ENCODE measurements at regions of chr17 and their contacts with region 1.

Region 1: DNA sequence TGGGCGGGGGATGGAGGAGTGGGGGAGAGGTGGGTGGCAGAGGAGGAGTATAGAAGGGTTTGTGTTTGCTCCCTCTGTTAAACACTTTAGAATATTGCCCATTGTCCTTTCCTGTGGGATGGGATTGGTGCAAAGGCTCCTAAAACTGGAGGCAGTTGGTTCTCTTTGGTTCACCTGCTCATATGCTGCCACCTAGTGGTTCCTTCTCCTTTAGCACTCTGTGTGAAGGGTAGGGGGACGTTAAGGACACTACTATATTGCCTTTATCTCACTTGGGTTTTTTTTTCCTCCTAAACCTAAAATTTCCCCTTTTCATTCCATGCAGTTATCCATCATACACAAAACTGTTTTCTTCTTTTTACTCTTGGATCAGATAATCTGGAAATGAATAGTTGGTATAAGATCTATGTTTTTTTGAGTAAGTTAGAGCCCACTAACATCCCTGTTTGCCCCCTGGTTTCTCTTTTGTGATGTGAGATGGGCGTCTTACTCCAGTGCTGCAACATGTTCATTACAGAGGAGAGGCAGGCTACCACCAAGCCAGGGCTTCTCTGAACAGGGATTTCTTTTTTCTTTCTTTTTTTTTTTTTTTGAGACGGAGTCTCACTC is 23.8 kb downstream of the SNX11 start:
- DNase-seq: peak; percentile 86
- H3K4me3 ChIP-seq: no peak overlapping the region
- H3K27ac ChIP-seq: no peak overlapping the region
- H3K4me1 ChIP-seq: no peaks in the 10 kb centered on the region
- H3K27me3 ChIP-seq: no peaks in the 10 kb centered on the region
- CTCF ChIP-seq: peak; percentile 92

Region 2: DNA sequence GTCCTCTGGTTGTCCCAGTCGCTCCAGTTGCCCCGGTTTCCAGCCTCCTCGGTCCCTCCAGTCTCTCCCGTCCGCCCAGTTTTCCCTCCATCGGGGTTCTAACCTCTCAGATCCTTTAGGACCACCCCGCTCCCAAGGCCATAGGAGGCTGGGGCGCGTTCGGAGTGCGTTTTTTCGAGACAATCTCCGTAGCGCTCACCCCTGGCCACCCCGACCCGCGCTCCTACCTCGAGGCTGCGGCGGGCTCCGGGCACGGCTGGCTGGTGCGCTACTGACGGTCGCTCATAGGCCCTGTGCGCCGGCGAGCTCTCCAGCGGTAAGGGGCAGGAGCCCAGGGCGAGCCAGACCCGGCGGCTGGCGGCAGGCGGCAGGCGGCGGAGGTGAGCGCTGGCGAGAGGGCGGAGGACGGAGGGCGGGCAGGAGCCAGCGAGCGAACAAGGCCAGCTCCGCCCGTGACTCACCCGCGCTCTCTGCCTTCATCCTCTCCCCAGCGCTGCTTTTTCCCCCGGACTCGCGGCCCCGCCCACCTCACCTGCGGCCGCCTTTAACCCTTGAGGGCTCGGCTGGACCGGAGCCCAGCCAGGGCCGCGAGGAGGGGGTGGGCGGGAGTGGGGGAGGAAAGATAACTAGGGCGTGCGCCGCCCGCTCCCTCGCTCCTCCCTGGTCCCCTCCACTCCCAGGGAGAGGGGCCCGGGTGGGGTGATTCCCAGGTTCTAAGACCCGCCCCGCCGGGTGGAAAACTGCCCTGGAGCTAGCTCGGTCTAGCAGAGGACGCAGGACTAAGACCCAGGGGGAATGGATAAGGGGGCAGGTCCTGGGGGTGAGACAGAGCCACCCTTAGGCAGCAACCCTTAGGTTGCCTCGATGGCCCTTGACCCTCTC is 280.4 kb before region 1 on chr17 and contains the start of gene SP6:
- CTCF ChIA-PET with region 1: no interaction called
- POLR2A ChIA-PET with region 1: no interaction called
- intact Hi-C with region 1: no loop called
- DNase-seq: no peak
- H3K4me3 ChIP-seq: no peak within 1 kb of the TSS
- H3K27ac ChIP-seq: no peak within 1 kb of the TSS
- H3K4me1 ChIP-seq: no peaks in the 10 kb centered on the region
- H3K27me3 ChIP-seq: peaks cover 97% of the 10 kb centered on the region
- CTCF ChIP-seq: no peak
- total RNA-seq, gene SP6: 0.15 and 0.66 TPM in 2 replicates

Region 3: DNA sequence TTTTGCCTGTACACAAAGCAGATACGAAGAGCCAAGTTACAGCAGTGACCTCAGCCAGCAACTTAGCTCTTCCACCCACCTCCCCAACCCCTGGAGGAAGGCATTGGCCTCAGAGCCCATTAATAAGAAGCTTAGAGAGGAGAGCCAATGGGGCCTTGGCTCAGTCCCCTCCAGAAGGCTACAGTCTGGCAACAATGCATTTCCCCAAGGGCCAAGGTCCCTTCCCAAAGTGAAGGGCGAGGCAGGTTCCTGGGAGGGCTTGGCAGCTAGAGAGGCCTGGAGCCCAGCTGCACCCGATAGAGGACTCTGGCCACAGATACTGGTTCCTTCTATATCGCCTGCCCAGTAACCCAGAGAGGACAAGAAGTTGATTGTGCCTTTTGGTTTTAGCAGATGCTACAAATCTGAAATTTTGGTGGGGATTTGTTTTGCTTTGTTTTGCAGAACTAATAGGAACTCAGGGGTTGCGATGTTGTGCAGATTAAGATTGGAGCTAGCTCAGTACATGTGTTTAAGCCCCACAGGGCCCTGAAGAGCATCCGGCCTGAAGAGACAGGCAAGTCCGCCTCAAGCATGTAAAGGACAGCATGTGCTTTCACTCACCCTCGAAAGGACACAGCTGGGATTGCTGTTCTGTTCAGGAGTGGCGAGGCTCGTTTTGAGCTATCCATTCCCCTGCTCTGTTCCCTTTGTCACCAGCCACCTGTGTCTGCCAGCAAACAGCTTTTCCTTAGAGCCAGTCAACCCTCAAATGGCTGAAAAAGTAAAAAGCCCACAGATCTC is 201.9 kb before region 1 on chr17:
- CTCF ChIA-PET with region 1: no interaction called
- POLR2A ChIA-PET with region 1: no interaction called
- intact Hi-C with region 1: no loop called
- DNase-seq: no peak
- H3K4me3 ChIP-seq: no peak overlapping the region
- H3K27ac ChIP-seq: no peak overlapping the region
- H3K4me1 ChIP-seq: no peaks in the 10 kb centered on the region
- H3K27me3 ChIP-seq: no peaks in the 10 kb centered on the region
- CTCF ChIP-seq: no peak

Region 4: DNA sequence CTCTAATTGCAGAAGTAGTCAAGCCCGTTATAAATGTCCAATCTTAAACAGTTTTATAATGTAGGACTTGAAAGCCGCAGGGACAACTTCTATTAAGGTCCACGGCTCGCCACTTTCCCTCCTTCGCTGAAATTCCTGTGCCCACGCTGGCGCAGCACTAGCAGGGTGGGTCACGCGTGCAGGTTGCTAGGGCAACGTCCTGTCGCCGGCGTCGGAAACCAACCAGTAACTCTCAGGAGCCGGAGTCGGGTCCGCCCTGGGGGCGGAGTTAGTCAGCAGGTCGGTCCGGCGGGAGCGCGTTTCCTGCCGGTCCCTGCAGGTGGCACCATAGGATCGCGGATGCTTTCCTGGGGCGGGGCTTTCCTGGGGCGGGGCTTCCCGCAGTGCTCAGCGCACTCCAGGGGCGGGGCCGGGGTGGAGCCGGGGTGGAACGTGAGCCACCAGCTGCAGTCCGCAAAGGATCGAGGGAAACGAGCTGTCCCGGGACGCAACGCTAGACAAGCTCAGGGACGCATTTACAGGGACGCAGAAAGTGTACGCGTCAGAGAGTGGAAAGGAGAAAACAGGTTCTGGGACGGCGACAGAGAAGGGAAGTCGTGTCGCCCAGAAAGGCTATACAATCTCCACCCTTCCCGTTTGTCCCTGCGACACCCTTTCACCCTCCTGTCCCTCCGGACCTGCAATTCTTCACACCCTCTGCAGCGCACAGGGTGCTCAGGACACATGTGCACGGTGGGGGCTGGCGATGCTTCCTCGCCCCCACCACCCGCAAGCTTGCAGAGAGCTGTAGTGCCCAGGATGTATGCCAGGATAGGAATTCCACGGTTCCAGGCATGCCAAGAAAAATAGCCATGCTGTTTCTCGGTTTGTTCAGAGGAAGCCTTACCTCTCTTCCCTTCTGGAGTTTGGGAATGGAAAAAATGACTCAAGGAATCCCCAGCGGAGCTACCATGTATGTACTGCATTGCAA is 106.1 kb before region 1 on chr17:
- CTCF ChIA-PET with region 1: interaction called, 7 read pairs
- POLR2A ChIA-PET with region 1: no interaction called
- intact Hi-C with region 1: loop called (anchors 1 kb)
- DNase-seq: peak; percentile 99
- H3K4me3 ChIP-seq: peak overlapping the region; percentile 46
- H3K27ac ChIP-seq: peak overlapping the region; percentile 57
- H3K4me1 ChIP-seq: peaks cover 44% of the 10 kb centered on the region
- H3K27me3 ChIP-seq: no peaks in the 10 kb centered on the region
- CTCF ChIP-seq: peak; percentile 95

Region 5: DNA sequence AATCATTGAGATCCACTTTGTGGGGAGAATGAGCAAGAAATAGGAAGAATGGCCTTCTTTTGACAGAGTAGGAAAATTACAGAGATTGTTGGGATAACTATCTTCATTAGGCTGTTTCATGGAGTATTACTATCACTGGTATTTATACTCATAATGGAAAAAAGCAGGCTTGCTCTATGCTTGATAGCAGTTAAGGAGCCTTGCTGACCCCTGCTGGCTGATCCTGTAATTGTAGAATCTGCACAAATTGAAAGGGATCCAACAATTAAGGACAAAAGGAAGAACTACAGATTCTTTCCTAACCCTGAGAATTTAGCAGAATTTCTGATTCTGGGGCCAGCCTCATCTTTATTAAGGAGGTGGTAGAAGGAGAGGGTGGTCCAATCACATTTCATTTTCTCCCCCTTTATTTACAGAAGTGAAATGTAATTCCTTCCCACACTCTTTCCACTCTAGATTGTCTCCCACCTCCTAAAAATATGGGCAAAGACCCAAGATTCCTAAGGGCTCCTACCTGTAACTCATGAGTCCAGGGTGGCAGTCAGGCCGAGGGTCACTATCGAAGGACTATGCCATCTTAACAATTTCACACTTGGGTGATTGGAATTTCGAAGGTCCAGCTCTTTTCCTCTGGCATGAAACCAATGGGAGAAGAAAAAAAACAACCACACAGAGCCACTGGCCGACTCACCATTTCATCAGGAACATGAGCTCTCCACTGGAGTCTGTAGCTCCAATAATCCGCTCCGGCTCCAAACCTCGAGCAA is 56.8 kb before region 1 on chr17:
- CTCF ChIA-PET with region 1: interaction called, 15 read pairs
- POLR2A ChIA-PET with region 1: no interaction called
- intact Hi-C with region 1: no loop called
- DNase-seq: peak; percentile 85
- H3K4me3 ChIP-seq: no peak overlapping the region
- H3K27ac ChIP-seq: no peak overlapping the region
- H3K4me1 ChIP-seq: no peaks in the 10 kb centered on the region
- H3K27me3 ChIP-seq: no peaks in the 10 kb centered on the region
- CTCF ChIP-seq: peak; percentile 87

Region 6: GRCh38 chr17:48081858-48082257 is 49.5 kb before region 1 on chr17:
- CTCF ChIA-PET with region 1: interaction called, 15 read pairs
- POLR2A ChIA-PET with region 1: no interaction called
- intact Hi-C with region 1: loop called (anchors 2 kb)
- DNase-seq: no peak
- H3K4me3 ChIP-seq: no peak overlapping the region
- H3K27ac ChIP-seq: no peak overlapping the region
- H3K4me1 ChIP-seq: peaks cover 11% of the 10 kb centered on the region
- H3K27me3 ChIP-seq: no peaks in the 10 kb centered on the region
- CTCF ChIP-seq: no peak

Region 7: GRCh38 chr17:48294020-48294805 is 162.9 kb after region 1 on chr17:
- CTCF ChIA-PET with region 1: interaction called, 11 read pairs
- POLR2A ChIA-PET with region 1: no interaction called
- intact Hi-C with region 1: no loop called
- DNase-seq: no peak
- H3K4me3 ChIP-seq: no peak overlapping the region
- H3K27ac ChIP-seq: no peak overlapping the region
- H3K4me1 ChIP-seq: peaks cover 27% of the 10 kb centered on the region
- H3K27me3 ChIP-seq: no peaks in the 10 kb centered on the region
- CTCF ChIP-seq: 0 out of 2 replicates have a peak, but pooled peaks have one; percentile 27

Region 8: GRCh38 chr17:48625495-48626244 is 494.4 kb after region 1 on chr17:
- CTCF ChIA-PET with region 1: no interaction called
- POLR2A ChIA-PET with region 1: interaction called, 10 read pairs
- intact Hi-C with region 1: no loop called
- DNase-seq: peak; percentile 54
- H3K4me3 ChIP-seq: peak overlapping the region; percentile 60
- H3K27ac ChIP-seq: peak overlapping the region; percentile 64
- H3K4me1 ChIP-seq: peaks cover 20% of the 10 kb centered on the region
- H3K27me3 ChIP-seq: no peaks in the 10 kb centered on the region
- CTCF ChIP-seq: no peak